Mammary epithelial cell (primary cell): ENCODE measurements at regions of chr9 and their contacts with region 1.

Region 1: DNA sequence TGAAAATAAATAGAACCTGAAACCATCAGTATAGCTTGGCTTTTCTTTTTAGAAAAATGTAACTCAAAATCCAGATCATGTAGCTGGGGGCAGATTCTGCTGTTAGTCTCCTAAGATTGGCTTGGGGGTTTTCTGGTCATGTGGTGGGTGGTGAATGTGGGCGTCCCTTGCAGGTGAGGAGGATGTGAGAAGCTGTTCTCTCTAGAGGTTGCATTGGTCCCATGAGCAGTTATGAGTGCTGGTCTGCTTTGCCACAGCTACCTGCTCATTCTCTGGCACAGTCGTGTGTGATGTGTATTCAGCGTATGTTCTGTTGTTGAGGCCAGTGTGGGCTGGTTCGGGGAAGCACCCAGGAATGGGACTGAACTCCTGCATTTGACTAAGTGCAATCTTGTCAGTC is 466.8 kb downstream of the DIRAS2 start:
- DNase-seq: no peak
- H3K4me3 ChIP-seq: no peak overlapping the region
- H3K27ac ChIP-seq: no peak overlapping the region
- H3K4me1 ChIP-seq: no peaks in the 10 kb centered on the region
- H3K27me3 ChIP-seq: no peaks in the 10 kb centered on the region
- CTCF ChIP-seq: no peak

Region 2: DNA sequence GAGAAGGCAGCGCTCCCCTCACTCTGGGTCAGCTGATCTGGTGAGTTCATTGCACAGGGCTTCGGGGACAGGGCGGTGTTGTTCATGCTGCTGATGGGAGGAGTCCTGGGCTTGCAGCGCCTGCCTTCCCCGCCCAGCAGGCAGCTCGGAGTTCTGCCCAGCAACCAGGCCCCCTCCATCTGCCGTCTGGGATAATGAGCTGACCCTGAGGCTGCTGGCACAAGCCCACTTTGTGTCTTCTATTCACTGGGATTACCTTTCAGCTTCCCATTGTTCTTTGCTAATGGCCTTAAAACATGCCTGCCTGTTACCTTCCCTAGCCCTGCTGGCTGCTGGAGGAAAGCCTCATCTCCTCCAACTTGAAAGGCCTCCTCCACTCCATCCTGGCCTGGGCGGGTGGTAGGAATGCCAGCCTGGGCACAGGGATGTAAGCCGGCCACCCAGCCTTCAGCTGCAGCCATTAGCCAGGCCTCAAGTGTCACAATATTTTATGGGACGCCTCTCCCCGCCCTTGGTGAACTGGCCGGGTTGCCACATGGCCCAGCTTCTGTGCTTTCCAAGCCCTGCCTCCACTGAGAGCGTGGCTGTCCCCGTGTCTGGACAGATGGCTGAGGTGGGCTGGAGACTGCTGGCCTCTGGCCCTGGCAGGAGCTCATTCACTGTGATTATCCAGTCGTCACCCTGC is 500.7 kb before region 1 on chr9:
- CTCF ChIA-PET with region 1: no interaction called
- dilution Hi-C with region 1: no loop called
- in situ Hi-C with region 1: no loop called
- intact Hi-C with region 1: no loop called
- DNase-seq: no peak
- H3K4me3 ChIP-seq: no peak overlapping the region
- H3K27ac ChIP-seq: no peak overlapping the region
- H3K4me1 ChIP-seq: no peaks in the 10 kb centered on the region
- H3K27me3 ChIP-seq: peaks cover 5% of the 10 kb centered on the region
- CTCF ChIP-seq: no peak

Region 3: DNA sequence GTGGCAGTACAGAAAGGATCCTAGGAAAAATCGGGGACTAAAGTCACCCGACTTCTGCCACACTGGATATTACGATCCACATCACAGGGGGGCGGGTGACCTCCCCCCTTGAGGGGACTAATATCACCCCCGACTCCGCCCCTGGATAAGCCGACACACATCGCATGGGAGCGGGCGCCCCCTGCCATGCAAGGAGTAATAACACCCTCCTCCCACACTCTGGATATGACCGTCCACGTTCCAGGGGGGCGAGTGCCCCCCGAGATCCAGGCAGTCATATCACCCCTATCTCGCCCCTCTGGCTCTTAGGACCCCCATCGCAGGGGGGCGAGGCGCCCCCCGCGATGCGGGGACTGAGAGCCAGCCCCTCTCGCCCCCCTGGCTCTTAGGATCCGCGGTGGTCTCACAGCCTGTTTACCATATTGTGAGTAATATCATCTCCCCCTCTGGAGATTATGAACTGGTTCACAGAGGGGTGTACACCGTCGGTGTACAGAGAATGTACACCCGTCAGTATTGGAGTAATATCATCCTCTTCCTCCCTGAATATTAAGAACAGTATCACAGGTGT is 43.8 kb after region 1 on chr9:
- CTCF ChIA-PET with region 1: no interaction called
- dilution Hi-C with region 1: no loop called
- in situ Hi-C with region 1: no loop called
- intact Hi-C with region 1: no loop called
- DNase-seq: no peak
- H3K4me3 ChIP-seq: no peak overlapping the region
- H3K27ac ChIP-seq: no peak overlapping the region
- H3K4me1 ChIP-seq: no peaks in the 10 kb centered on the region
- H3K27me3 ChIP-seq: no peaks in the 10 kb centered on the region
- CTCF ChIP-seq: peak in 1 of 2 donors; percentile 24

Region 4: GRCh38 chr9:90433398-90433941 is 257.6 kb after region 1 on chr9:
- CTCF ChIA-PET with region 1: no interaction called
- dilution Hi-C with region 1: no loop called
- in situ Hi-C with region 1: no loop called
- intact Hi-C with region 1: no loop called
- DNase-seq: peak; percentile 28
- H3K4me3 ChIP-seq: no peak overlapping the region
- H3K27ac ChIP-seq: no peak overlapping the region
- H3K4me1 ChIP-seq: no peaks in the 10 kb centered on the region
- H3K27me3 ChIP-seq: peaks cover 1% of the 10 kb centered on the region
- CTCF ChIP-seq: no peak

Region 5: GRCh38 chr9:90499761-90500160 is 323.9 kb after region 1 on chr9:
- CTCF ChIA-PET with region 1: no interaction called
- dilution Hi-C with region 1: loop called (anchors 10 kb)
- in situ Hi-C with region 1: no loop called
- intact Hi-C with region 1: no loop called
- DNase-seq: no peak
- H3K4me3 ChIP-seq: no peak overlapping the region
- H3K27ac ChIP-seq: no peak overlapping the region
- H3K4me1 ChIP-seq: no peaks in the 10 kb centered on the region
- H3K27me3 ChIP-seq: no peaks in the 10 kb centered on the region
- CTCF ChIP-seq: no peak